Caco-2 (cell line): ENCODE measurements at regions of chr10 and their contacts with region 1.

Region 1: GRCh38 chr10:86965986-86966654 is 2.2 kb upstream of the ADIRF start:
- DNase-seq: no peak
- H3K4me3 ChIP-seq: no peak overlapping the region
- H3K4me3 Mint-ChIP-seq: no peak overlapping the region
- H3K27ac Mint-ChIP-seq: peak overlapping the region; percentile 55
- H3K4me1 ChIP-seq: peaks cover 23% of the 10 kb centered on the region
- H3K4me1 Mint-ChIP-seq: peaks cover 15% of the 10 kb centered on the region
- H3K27me3 ChIP-seq: no peaks in the 10 kb centered on the region
- H3K27me3 Mint-ChIP-seq: no peaks in the 10 kb centered on the region
- CTCF ChIP-seq: no peak

Region 2: DNA sequence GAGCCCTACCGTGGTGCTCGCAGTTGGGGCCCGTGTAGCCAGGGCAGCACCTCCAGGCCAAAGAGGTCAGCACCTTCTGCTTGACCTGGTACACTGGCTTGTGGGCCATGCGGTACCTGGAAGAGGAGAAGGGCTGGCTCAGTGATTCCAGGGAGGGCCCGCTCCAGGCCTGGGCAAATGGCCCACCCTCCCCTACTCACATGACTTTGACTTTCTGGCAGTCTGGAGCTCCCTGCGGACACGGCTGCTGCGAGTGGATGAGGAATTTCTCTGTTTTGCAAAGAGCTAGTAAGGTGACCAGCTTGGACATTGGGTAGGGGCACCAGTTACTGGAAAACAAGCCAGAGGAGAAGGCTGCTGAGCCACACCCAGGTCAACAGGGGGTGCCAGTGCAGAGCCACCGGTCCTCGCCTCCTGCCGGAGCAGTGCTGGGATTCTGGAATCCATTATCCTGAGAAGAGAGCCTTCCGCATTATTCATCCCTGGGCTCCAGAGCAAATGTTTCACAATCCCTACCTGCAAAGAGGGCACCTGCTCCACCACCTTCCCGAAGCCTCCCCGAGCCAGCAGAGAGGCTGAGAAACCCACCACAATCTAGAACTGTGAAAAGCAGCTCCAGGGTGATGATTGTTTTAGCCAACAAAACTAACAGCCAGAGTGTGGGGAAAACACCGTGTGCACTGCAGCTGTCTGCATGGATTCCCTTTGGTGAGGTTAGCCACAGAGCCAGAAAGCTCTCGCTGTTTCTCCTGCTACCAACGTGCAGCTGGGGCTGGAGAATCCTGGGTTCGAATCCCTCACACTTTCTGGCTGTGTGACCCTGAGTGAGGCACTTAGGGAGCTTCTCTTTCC is 20.5 kb before region 1 on chr10:
- CTCF ChIA-PET with region 1: interaction called, 10 read pairs
- POLR2A ChIA-PET with region 1: no interaction called
- intact Hi-C with region 1: no loop called
- DNase-seq: peak; percentile 41 to 43
- H3K4me3 ChIP-seq: no peak overlapping the region
- H3K4me3 Mint-ChIP-seq: no peak overlapping the region
- H3K27ac Mint-ChIP-seq: no peak overlapping the region
- H3K4me1 ChIP-seq: no peaks in the 10 kb centered on the region
- H3K4me1 Mint-ChIP-seq: no peaks in the 10 kb centered on the region
- H3K27me3 ChIP-seq: no peaks in the 10 kb centered on the region
- H3K27me3 Mint-ChIP-seq: no peaks in the 10 kb centered on the region
- CTCF ChIP-seq: peak; percentile 13 to 39